ENCODE measurements at regions of chr3 and their contacts with region 1.

Region 1: GRCh38 chr3:137709011-137709601 is 55.0 kb upstream of the SOX14 start:
- DNase-seq: peak; percentile 42
- ATAC-seq: 0 out of 2 replicates have a peak, but pooled peaks have one; percentile 36
- H3K4me3 Mint-ChIP-seq: no peak overlapping the region
- H3K27ac Mint-ChIP-seq: no peak overlapping the region
- H3K4me1 Mint-ChIP-seq: no peaks in the 10 kb centered on the region
- H3K27me3 Mint-ChIP-seq: peaks cover 2% of the 10 kb centered on the region; the same call in 1 of the 2 replicates
- CTCF ChIP-seq: peak; percentile 74

Region 2: GRCh38 chr3:137121704-137122314 is 587.3 kb before region 1 on chr3:
- CTCF ChIA-PET with region 1: no interaction called
- POLR2A ChIA-PET with region 1: no interaction called
- DNase-seq: peak; percentile 58
- ATAC-seq: peak; percentile 95
- H3K4me3 Mint-ChIP-seq: no peak overlapping the region
- H3K27ac Mint-ChIP-seq: no peak overlapping the region
- H3K4me1 Mint-ChIP-seq: peaks cover 2% of the 10 kb centered on the region
- H3K27me3 Mint-ChIP-seq: no peaks in the 10 kb centered on the region
- CTCF ChIP-seq: peak; percentile 65

Region 3: GRCh38 chr3:137792626-137793271 is 83.6 kb after region 1 on chr3:
- CTCF ChIA-PET with region 1: interaction called, 15 read pairs
- POLR2A ChIA-PET with region 1: no interaction called
- DNase-seq: peak; percentile 67
- ATAC-seq: peak; percentile 80
- H3K4me3 Mint-ChIP-seq: no peak overlapping the region
- H3K27ac Mint-ChIP-seq: no peak overlapping the region
- H3K4me1 Mint-ChIP-seq: peaks cover 21% of the 10 kb centered on the region
- H3K27me3 Mint-ChIP-seq: no peaks in the 10 kb centered on the region
- CTCF ChIP-seq: peak; percentile 61

Region 4: GRCh38 chr3:137970914-137971831 is 262.1 kb after region 1 on chr3:
- CTCF ChIA-PET with region 1: interaction called, 18 read pairs
- POLR2A ChIA-PET with region 1: no interaction called
- DNase-seq: peak; percentile 92
- ATAC-seq: peak; percentile 99
- H3K4me3 Mint-ChIP-seq: no peak overlapping the region
- H3K27ac Mint-ChIP-seq: no peak overlapping the region
- H3K4me1 Mint-ChIP-seq: peaks cover 4% of the 10 kb centered on the region; the same call in 1 of the 2 replicates
- H3K27me3 Mint-ChIP-seq: peaks cover 4% of the 10 kb centered on the region
- CTCF ChIP-seq: peak; percentile 81

Measured in WTC11 (cell line).